GM10248 (cell line): ENCODE measurements at regions of chr15 and their contacts with region 1.

Region 1: DNA sequence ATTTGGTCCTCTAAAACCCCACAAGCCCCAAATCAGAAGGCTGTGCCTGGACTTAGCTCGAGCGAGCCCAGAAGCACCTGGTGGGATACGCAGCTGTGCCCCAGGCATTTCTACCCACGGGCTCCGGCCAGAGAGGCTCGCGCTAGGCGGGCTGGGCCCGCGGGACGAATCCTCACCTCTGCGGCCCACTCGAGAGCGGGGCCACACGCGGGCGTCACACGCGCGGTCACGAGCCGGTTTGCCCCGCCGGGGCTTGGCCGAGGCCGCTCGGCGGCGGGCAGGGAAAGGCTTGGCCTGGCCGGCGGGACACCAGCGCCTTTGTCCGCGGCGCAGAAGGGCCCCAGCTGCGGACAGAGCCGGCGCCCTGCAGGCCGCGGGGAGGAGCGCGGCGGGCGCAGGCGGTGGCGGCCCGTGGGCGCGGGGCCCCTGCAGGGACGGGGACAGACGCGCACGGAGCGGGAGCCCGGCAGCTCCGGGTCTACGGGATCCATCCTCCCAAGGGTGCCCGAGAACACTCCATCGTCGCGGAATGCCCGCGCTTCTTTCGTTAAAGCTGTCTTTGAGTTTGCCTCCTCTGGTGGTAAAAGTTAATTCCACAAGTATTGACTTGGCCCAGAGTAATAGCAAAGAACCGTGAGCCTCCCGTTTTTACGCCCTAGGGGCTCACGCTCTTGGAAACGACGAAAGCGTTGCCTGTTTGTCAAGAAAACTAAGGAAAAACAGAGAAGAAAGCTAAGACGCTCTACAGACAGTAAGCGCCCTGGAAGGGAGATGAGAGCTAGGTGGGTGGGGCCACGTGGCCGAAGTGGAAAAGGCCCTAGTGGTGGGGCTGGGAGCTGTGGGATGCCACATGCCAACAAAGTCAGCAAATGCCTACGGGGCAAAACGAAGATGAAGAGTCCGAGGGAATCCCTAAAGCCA is 26.4 kb downstream of the TYRO3 start:
- DNase-seq: no peak
- CTCF ChIP-seq: no peak

Region 2: DNA sequence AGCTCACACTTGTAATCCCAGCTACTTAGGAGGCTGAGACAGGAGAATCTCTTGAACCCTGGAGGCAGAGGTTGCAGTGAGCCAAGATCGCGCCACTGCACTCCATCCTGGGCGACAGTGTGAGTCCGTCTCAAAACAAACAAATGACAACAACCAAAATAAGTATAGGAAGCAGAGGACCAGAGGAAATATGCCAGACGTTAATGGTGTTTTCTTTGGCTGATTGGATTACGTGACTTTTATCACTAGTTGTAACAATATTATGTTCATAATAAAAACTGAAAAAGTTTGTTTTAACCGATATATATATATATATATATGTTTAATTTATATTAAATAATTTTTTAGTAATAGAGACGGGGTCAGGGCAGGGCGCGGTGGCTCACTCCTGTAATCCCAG is 231.0 kb before region 1 on chr15:
- CTCF ChIA-PET with region 1: no interaction called
- POLR2A ChIA-PET with region 1: no interaction called
- DNase-seq: no peak
- CTCF ChIP-seq: no peak

Region 3: GRCh38 chr15:41603941-41604911 is 18.8 kb after region 1 on chr15:
- CTCF ChIA-PET with region 1: interaction called, 18 read pairs
- POLR2A ChIA-PET with region 1: no interaction called
- DNase-seq: peak; percentile 43
- CTCF ChIP-seq: peak; percentile 60

Region 4: DNA sequence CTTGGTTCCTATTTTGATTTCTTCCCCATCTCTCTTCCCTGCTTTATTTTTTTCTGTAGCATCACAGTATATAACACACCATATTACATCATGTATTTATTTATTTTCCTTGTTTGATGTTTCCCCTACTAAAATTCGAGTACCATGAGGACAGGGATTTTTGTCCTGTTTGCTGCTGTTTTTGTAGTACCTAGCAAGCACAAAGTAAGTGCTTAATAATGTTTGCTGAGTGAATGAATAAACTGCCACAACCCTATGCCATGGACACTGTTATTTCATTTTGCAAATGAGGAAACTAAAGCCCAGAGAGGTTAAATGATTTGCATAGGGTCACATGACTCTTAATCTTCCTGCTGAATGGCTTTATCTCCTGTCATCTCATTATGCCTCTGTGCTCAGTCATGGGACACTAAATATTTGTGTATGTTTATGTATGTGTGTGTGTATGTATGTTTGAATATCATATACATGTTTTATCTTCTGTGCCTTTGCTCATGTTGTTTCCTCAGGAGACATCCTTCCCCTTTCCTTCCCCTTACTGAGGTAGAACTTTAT is 48.8 kb after region 1 on chr15:
- CTCF ChIA-PET with region 1: no interaction called
- POLR2A ChIA-PET with region 1: no interaction called
- DNase-seq: no peak
- CTCF ChIP-seq: no peak

Region 5: GRCh38 chr15:42619656-42620371 is 1034.4 kb after region 1 on chr15:
- CTCF ChIA-PET with region 1: no interaction called
- POLR2A ChIA-PET with region 1: no interaction called
- DNase-seq: no peak
- CTCF ChIP-seq: no peak